Common myeloid progenitor, CD34-positive (primary cell): ENCODE measurements at regions of chr7 and their contacts with region 1.

Region 1: GRCh38 chr7:105652359-105652993 is 71.2 kb upstream of the EFCAB10 start:
- DNase-seq: peak; percentile 50 to 74 (median 64)
- H3K4me3 ChIP-seq: no peak overlapping the region
- H3K27ac ChIP-seq: no peak overlapping the region
- H3K4me1 ChIP-seq: peaks cover 6 to 34% (median 20%) of the 10 kb centered on the region in 4 experiments
- H3K27me3 ChIP-seq: no peaks in the 10 kb centered on the region

Region 2: GRCh38 chr7:105673367-105674142 is 21.1 kb after region 1 on chr7:
- CTCF ChIA-PET with region 1: interaction called, 41 read pairs
- POLR2A ChIA-PET with region 1: no interaction called
- DNase-seq: peak in 2 of 3 donors; percentile 74 to 85
- H3K4me3 ChIP-seq: peak overlapping the region in 1 of 7 experiments; percentile 7
- H3K27ac ChIP-seq: peak overlapping the region in 1 of 2 experiments; percentile 28
- H3K4me1 ChIP-seq: peaks cover 16 to 60% (median 52%) of the 10 kb centered on the region in 4 experiments
- H3K27me3 ChIP-seq: no peaks in the 10 kb centered on the region

Region 3: DNA sequence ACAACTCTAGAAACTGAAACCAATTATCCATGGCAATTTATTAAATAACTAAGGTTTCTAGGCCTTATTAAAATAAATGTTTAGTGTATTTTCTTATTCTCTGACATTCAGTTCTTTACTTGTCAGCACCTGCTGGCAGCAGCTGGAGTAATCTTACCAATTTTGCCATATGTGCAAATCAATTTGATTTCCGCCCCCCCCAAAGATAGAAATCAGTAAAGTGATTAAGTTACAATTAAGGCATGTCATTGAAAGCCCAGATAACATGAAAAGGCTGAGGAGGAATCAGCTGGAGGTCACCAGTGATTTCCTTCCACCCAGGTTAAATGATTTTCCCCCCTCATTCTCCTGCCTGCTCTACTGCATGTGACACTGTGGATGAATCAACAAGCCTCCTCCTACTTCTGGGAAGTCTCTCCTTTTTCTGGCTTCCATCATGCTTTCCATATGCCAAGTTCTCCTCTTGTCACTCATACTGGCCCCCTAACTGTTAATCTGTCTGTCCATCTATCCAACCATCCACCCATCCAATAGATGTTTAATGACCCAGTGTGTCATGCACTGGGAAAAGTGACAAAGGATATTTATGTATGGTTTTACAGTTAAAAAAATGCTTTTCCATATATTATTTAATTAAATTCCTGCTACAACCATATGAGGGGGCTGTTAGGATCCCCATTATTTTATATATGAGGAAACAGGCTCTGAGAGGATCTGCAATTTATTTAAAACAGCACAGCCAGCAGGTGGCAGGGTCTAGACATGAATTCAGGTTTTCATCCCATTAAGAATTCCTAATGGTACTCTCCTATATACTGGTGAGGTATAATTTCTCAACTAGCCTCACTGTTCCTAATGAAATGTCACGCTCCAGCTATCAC is 107.4 kb after region 1 on chr7:
- CTCF ChIA-PET with region 1: interaction called, 10 read pairs
- POLR2A ChIA-PET with region 1: no interaction called
- DNase-seq: peak; percentile 34 to 56 (median 54)
- H3K4me3 ChIP-seq: no peak overlapping the region
- H3K27ac ChIP-seq: no peak overlapping the region
- H3K4me1 ChIP-seq: peaks cover 0 to 6% (median 2%) of the 10 kb centered on the region in 4 experiments
- H3K27me3 ChIP-seq: peaks cover 0 to 3% (median 0%) of the 10 kb centered on the region in 5 experiments

Region 4: GRCh38 chr7:106041140-106041717 is 388.8 kb after region 1 on chr7:
- CTCF ChIA-PET with region 1: interaction called, 21 read pairs
- POLR2A ChIA-PET with region 1: interaction called, 3 read pairs
- DNase-seq: peak; percentile 54 to 69 (median 68)
- H3K4me3 ChIP-seq: no peak overlapping the region
- H3K27ac ChIP-seq: no peak overlapping the region
- H3K4me1 ChIP-seq: peaks cover 0 to 5% (median 4%) of the 10 kb centered on the region in 4 experiments
- H3K27me3 ChIP-seq: peaks cover 0 to 26% (median 16%) of the 10 kb centered on the region in 5 experiments